ENCODE measurements at regions of chr21 and their contacts with region 1.

Region 1: GRCh38 chr21:38244885-38245545 is 11.8 kb upstream of the KCNJ15 start:
- DNase-seq: peak; percentile 89
- H3K4me3 Mint-ChIP-seq: peak overlapping the region; percentile 10
- H3K27ac Mint-ChIP-seq: peak overlapping the region; percentile 87
- H3K4me1 Mint-ChIP-seq: peaks cover 41% of the 10 kb centered on the region
- H3K27me3 Mint-ChIP-seq: no peaks in the 10 kb centered on the region

Region 2: DNA sequence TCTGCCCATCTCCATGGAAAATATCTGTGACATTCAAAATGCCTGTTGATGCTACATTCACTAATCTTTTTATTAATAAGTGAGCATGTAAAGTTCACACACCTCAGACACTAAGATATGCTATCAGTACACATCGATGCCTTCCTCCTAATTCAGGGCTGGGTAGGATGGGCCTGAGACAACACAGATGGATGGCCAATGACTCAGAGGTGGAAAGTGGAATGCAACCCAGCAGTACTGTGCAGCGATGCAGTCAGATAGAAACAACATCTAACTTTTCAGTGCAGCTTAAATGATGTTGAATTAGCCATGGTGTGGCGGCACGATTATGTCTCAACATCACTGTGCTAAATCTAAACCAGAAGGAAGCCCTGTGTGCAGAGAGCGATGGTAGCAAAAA is 149.8 kb before region 1 on chr21:
- CTCF ChIA-PET with region 1: no interaction called
- intact Hi-C with region 1: no loop called
- DNase-seq: no peak
- H3K4me3 Mint-ChIP-seq: no peak overlapping the region
- H3K27ac Mint-ChIP-seq: no peak overlapping the region
- H3K4me1 Mint-ChIP-seq: no peaks in the 10 kb centered on the region
- H3K27me3 Mint-ChIP-seq: peaks cover 23% of the 10 kb centered on the region

Region 3: GRCh38 chr21:38196036-38196435 is 49.0 kb before region 1 on chr21:
- CTCF ChIA-PET with region 1: no interaction called
- intact Hi-C with region 1: no loop called
- DNase-seq: no peak
- H3K4me3 Mint-ChIP-seq: no peak overlapping the region
- H3K27ac Mint-ChIP-seq: no peak overlapping the region
- H3K4me1 Mint-ChIP-seq: no peaks in the 10 kb centered on the region
- H3K27me3 Mint-ChIP-seq: peaks cover 9% of the 10 kb centered on the region

Region 4: GRCh38 chr21:38208118-38208517 is 36.9 kb before region 1 on chr21:
- CTCF ChIA-PET with region 1: no interaction called
- intact Hi-C with region 1: no loop called
- DNase-seq: no peak
- H3K4me3 Mint-ChIP-seq: no peak overlapping the region
- H3K27ac Mint-ChIP-seq: no peak overlapping the region
- H3K4me1 Mint-ChIP-seq: peaks cover 4% of the 10 kb centered on the region
- H3K27me3 Mint-ChIP-seq: peaks cover 15% of the 10 kb centered on the region

Region 5: DNA sequence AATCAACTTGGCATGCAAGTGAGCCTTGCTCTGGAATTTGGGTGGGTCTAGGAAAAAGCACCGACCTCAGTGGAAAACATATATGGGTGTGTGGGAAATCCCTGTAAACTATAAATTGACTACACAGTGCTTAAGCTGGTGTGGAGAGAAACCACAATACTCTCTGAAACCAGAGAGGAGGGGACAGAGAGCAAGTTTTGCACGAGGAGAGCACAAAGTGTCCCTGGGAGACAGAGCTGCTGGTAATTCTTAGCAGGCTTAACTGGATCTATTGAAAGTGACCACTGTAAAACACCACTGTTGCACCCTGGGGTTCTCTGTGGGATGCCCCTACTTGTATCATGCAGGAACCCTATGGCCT is 24.5 kb after region 1 on chr21:
- CTCF ChIA-PET with region 1: interaction called, 3 read pairs
- intact Hi-C with region 1: loop called (anchors 1 kb)
- DNase-seq: peak; percentile 8
- H3K4me3 Mint-ChIP-seq: no peak overlapping the region
- H3K27ac Mint-ChIP-seq: no peak overlapping the region
- H3K4me1 Mint-ChIP-seq: peaks cover 37% of the 10 kb centered on the region
- H3K27me3 Mint-ChIP-seq: no peaks in the 10 kb centered on the region

Region 6: GRCh38 chr21:38306433-38307141 is 61.6 kb after region 1 on chr21:
- CTCF ChIA-PET with region 1: interaction called, 3 read pairs
- intact Hi-C with region 1: loop called (anchors 2 kb)
- DNase-seq: no peak
- H3K4me3 Mint-ChIP-seq: no peak overlapping the region
- H3K27ac Mint-ChIP-seq: no peak overlapping the region
- H3K4me1 Mint-ChIP-seq: peaks cover 23% of the 10 kb centered on the region
- H3K27me3 Mint-ChIP-seq: no peaks in the 10 kb centered on the region

Region 7: DNA sequence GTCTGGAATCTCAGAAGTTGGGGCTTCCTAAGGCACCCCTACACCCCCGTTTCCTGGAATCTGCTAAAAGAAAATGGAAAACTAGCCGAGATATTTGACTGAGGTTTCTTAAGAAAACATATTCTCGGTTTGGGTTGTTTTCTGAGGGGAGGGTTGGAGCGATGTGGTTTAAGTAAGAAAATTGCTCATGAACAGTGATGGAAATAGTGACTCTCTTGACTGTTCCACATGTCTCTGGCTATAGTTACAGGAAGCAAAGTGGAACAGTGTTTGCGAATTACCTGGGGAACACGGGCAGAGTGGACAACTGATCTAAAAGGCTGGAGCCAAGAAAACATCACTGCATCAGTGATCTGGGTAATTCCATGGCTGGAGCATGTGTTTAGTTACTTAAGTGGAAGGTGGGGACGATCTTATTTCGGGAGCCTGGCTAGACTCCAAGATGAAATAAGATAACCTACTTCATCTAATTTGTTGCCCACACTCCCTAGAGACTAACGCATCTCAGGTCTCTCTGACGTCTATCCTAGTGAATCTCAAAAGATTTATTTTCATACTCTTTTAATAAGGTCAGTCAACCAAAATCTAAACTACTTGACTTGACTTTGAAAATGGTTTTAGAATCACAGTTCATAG is 104.2 kb after region 1 on chr21:
- CTCF ChIA-PET with region 1: interaction called, 10 read pairs
- intact Hi-C with region 1: loop called (anchors 1 kb)
- DNase-seq: peak; percentile 44
- H3K4me3 Mint-ChIP-seq: no peak overlapping the region
- H3K27ac Mint-ChIP-seq: peak overlapping the region; percentile 77
- H3K4me1 Mint-ChIP-seq: peaks cover 44% of the 10 kb centered on the region
- H3K27me3 Mint-ChIP-seq: no peaks in the 10 kb centered on the region

Measured in activated naive CD4-positive, alpha-beta T cell treated with anti-CD3 and anti-CD28 coated beads for 36 hours (primary cell).